Left colon (tissue), 2 donors: ENCODE measurements at regions of chr17 and their contacts with region 1.

Region 1: GRCh38 chr17:48878918-48879898 is 13.4 kb upstream of the ATP5MC1 start:
- DNase-seq: peak in 1 of 2 donors; percentile 41
- ATAC-seq: peak; percentile 78

Region 2: DNA sequence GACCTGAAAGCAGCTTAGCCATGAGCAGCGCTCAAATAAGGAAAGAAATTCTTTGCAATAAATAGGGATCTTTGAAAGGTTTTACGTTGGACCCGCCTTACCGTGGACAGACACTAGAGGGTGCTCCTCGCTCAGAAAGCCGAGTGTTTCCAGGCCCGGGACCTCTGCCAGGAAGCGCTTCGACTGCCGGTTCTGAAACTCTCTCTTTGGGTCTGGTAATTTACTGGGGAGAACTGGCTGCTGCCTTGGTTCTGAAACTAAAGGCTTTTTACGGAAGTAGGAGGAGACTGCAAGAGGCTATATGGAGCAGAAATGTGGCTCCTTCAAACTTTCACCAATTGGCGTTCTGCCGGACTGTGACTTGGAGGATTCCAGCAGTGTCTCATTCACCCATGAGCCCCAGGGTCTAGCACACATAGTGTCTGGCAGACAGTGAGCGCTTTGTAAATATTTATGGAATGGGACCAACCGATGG is 207.5 kb before region 1 on chr17:
- intact Hi-C with region 1: loop called in 1 of 2 experiments (anchors 5 kb)
- DNase-seq: peak; percentile 78 to 93
- ATAC-seq: peak; percentile 81

Region 3: DNA sequence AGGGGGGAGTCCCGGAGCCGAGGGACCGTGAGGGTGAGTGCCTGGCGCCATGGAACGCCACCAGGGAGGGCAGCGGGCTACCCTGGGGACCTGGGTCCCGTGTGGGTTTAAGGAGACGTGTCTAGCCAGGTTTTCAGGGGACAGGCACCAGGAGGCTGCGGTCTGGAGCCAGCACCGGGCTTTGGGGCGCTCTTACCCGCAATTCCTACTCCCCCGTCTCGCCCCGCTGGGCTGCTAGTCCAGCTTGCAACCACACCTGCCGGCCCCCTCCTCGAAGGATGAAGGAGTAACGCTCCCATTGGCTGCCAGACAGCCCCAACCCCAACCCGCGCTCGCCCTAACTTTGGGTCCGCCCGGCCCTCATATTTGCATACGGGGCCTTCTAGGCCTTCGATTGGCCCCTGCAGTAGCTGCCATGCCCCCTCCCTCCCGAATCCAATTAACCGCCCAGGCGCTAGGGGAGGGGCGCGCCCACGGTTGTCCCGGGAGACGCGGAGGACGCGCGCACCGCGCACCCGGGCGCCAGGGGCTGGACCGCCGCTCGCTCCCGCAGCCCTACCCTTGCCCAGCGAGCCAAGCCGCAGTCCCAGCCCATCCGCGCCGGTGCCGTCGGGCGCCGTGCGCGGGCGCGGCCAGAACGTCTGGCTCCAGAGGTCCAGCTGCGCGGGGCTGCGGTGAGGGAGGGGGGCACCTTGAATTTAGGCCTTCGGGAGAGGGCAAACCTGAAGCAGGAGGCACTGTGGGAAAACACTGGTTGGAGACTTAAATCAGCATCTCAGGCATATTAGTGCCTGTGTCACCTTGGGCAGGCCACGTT is 62.2 kb before region 1 on chr17 and contains the start of gene TTLL6:
- intact Hi-C with region 1: no loop called
- DNase-seq: peak; percentile 91 to 96
- ATAC-seq: peak; percentile 93
- total RNA-seq, gene TTLL6: 4.9 to 14.3 TPM

Region 4: GRCh38 chr17:48928876-48929811 is 49.9 kb after region 1 on chr17:
- intact Hi-C with region 1: no loop called
- DNase-seq: no peak
- ATAC-seq: peak; percentile 51

Region 5: DNA sequence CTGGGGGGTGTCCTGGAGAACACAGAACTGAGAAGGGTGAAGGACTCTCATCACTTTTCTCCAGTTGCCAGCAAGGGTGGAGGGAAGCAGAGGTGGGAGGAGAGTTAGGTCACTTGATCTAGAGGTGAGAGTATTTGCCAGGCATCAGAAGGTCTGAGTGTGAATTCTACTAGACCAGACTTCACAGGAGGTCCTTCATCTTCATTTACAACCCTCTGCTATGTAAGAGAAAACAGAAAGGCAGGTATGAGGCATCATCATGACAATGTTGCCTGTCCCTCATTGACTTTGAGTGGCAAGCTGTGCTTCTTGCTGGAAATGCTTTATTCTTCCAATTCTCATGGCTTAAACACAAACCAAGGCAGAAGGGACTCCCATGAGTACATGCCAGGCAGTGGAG is 207.4 kb after region 1 on chr17:
- intact Hi-C with region 1: no loop called
- DNase-seq: no peak
- ATAC-seq: peak; percentile 28